Transverse colon (tissue), 4 donors: ENCODE measurements at regions of chr6 and their contacts with region 1.

Region 1: DNA sequence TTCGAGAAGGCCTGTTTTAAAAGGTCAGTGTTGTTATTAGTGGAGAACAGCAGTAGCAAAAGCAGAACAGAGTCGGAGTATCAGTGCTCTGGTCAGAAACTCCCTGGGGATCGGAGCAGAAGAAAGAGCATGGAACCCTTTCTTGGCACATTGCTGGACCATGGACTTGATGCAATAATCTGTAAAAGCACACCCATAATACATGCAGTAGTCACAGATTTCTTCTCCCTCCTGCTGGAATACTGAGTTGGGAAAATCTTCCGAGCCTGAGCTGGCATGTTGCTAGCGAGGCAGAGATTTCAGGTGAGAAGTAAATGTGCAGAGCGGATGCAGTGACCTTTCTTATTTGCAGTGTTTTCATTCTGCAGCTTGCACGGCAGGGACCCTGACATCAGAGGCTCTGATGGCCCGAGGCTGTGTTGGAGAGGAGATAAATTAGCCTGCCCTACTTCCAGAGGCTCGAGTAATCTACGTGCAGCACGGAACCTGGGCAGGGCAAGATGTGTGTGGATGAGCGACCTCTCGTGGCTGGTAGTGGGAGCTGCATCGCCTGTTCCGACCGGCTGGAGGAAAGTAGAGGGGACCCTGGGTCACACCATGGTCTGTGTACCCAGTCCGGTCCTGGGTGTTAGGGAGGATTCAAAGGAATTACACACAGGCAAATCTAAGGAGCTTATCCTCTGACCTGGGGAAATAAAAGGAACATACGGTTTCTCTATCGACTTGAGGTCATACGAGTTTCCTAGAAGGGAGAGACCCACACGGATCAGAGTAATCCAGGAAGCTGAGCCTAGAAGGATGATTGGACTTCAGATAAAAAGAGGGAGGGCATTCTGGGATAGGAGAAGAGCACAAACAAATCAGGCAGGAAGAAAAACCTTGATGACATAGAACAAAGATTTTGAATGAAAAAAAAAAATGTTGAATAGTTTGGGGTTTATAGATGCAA is 137.0 kb upstream of the STMND1 start:
- DNase-seq: peak; percentile 70
- H3K4me3 ChIP-seq: no peak overlapping the region
- H3K27ac ChIP-seq: no peak overlapping the region
- H3K4me1 ChIP-seq: peaks cover 0 to 7% (median 0%) of the 10 kb centered on the region in 4 donors
- H3K27me3 ChIP-seq: peaks cover 6% of the 10 kb centered on the region
- CTCF ChIP-seq: peak; percentile 80 to 91 (median 85)
- EP300 ChIP-seq: no peak
- POLR2A ChIP-seq: no peak

Region 2: GRCh38 chr6:16514249-16514648 is 450.6 kb before region 1 on chr6:
- in situ Hi-C with region 1: loop called in 1 of 4 experiments (anchors 25 kb)
- intact Hi-C with region 1: no loop called
- DNase-seq: no peak
- H3K4me3 ChIP-seq: no peak overlapping the region
- H3K27ac ChIP-seq: peak overlapping the region in 3 of 4 donors; percentile 15 to 49 (median 43)
- H3K4me1 ChIP-seq: peaks cover 8 to 35% (median 16%) of the 10 kb centered on the region in 4 donors
- H3K27me3 ChIP-seq: no peaks in the 10 kb centered on the region
- CTCF ChIP-seq: peak; percentile 34 to 49 (median 39)
- EP300 ChIP-seq: no peak
- POLR2A ChIP-seq: no peak

Region 3: GRCh38 chr6:16761471-16762267 is 203.2 kb before region 1 on chr6:
- in situ Hi-C with region 1: loop called in 1 of 4 experiments (anchors 10 kb)
- intact Hi-C with region 1: no loop called
- DNase-seq: peak; percentile 91
- H3K4me3 ChIP-seq: peak overlapping the region; percentile 60 to 95 (median 89)
- H3K27ac ChIP-seq: peak overlapping the region; percentile 99 to 100 (median 100)
- H3K4me1 ChIP-seq: peaks cover 0 to 59% (median 24%) of the 10 kb centered on the region in 4 donors
- H3K27me3 ChIP-seq: no peaks in the 10 kb centered on the region
- CTCF ChIP-seq: peak in 2 of 5 experiments; percentile 9 to 28
- EP300 ChIP-seq: no peak
- POLR2A ChIP-seq: peak; percentile 52